Activated CD8-positive, alpha-beta memory T cell treated with anti-CD3 and anti-CD28 coated beads, Interleukin-2, amount 10 ng/mL, durations not matched to agents 7 days and 5 days (primary cell): ENCODE measurements at regions of chr17 and their contacts with region 1.

Region 1: GRCh38 chr17:59561042-59561441 is 4.4 kb upstream of the DHX40 start:
- DNase-seq: peak; percentile 43
- ATAC-seq: peak; percentile 32
- H3K4me3 Mint-ChIP-seq: no peak overlapping the region
- H3K27ac Mint-ChIP-seq: no peak overlapping the region
- H3K4me1 Mint-ChIP-seq: peaks cover 16% of the 10 kb centered on the region
- H3K27me3 Mint-ChIP-seq: peaks cover 2% of the 10 kb centered on the region

Region 2: GRCh38 chr17:59311130-59311920 is 249.7 kb before region 1 on chr17:
- CTCF ChIA-PET with region 1: interaction called, 12 read pairs
- DNase-seq: peak; percentile 66
- ATAC-seq: peak; percentile 96
- H3K4me3 Mint-ChIP-seq: no peak overlapping the region
- H3K27ac Mint-ChIP-seq: peak overlapping the region; percentile 25
- H3K4me1 Mint-ChIP-seq: peaks cover 8% of the 10 kb centered on the region
- H3K27me3 Mint-ChIP-seq: no peaks in the 10 kb centered on the region

Region 3: GRCh38 chr17:59355696-59356325 is 205.2 kb before region 1 on chr17:
- CTCF ChIA-PET with region 1: no interaction called
- DNase-seq: no peak
- ATAC-seq: no peak
- H3K4me3 Mint-ChIP-seq: no peak overlapping the region
- H3K27ac Mint-ChIP-seq: no peak overlapping the region
- H3K4me1 Mint-ChIP-seq: peaks cover 74% of the 10 kb centered on the region
- H3K27me3 Mint-ChIP-seq: no peaks in the 10 kb centered on the region